Head of caudate nucleus (tissue), 42 donors: ENCODE measurements at regions of chr10 and their contacts with region 1.

Region 1: GRCh38 chr10:69123747-69124562 is at the start of gene VPS26A:
- DNase-seq: peak; percentile 97 to 100 (median 100)

Region 2: DNA sequence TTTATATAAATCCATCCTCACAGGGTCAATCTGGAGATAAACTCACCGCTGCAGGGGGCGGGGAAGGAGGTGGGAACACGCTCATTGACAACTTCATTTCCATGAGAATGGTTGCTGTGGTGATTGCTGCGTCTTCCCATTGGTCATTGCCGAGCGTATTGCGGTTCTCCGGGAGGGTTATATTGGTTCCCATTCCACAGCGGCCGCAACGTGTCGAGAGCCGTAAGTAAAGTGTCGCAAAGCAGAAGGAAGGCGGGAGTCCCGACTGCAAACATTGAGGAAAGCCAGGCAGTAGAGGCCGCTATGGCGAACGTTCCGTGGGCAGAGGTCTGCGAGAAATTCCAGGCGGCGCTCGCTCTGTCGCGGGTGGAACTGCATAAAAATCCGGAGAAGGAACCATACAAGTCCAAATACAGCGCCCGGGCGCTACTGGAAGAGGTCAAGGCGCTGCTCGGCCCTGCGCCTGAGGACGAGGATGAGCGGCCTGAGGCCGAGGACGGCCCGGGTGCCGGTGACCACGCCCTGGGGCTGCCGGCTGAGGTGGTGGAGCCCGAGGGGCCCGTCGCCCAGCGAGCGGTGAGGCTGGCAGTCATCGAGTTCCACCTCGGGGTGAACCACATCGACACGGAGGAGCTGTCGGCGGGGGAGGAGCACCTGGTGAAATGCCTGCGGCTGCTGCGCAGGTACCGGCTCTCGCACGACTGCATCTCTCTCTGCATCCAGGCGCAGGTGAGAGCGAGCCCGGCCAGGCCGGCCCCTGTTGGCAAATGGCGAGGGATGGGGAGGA is 135.2 kb before region 1 on chr10 and contains the start of gene KIFBP:
- intact Hi-C with region 1: loop called (anchors 5 kb)
- DNase-seq: peak; percentile 90 to 99 (median 97)

Region 3: DNA sequence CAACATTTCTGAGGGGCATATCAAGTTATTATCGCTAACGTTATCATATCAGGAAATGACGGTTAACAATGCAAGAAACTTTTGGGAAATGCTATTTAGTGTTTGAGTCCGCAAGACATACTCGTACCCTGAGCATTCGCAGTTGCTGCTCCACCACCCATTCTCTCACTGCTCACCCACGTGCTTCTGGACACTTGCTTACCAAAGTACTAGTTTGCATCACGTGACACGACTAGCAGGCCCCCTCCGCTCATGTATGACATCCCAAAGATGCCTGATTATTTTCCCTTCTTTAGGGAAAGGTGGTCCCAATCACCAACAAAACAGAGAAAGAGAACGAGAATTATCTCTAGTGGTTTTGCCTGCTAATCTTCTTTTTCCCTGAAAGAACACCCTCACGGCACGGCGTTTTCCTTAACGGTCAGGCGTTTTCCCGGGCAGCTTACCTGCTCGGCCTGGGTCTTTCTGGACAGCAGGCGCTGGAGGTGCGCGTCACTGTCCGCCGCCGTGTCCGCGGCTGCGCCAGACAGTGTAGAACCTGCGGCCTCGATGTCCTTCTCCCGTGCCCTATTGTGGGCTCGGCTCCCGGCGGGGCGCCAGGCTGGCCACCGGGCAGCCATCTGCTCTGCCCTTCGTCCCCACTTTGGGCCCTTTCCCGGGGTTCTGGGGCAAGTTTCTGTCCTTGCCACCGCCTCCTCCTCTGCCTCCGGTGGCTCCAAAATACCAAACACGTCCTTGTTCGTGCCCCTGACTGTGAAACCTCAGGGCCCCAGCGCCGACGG is 56.0 kb after region 1 on chr10 and contains the start of gene SUPV3L1:
- intact Hi-C with region 1: loop called (anchors 5 kb)
- DNase-seq: peak; percentile 87 to 99 (median 96)